HepG2 (cell line): ENCODE measurements at regions of chr14 and their contacts with region 1.

Region 1: DNA sequence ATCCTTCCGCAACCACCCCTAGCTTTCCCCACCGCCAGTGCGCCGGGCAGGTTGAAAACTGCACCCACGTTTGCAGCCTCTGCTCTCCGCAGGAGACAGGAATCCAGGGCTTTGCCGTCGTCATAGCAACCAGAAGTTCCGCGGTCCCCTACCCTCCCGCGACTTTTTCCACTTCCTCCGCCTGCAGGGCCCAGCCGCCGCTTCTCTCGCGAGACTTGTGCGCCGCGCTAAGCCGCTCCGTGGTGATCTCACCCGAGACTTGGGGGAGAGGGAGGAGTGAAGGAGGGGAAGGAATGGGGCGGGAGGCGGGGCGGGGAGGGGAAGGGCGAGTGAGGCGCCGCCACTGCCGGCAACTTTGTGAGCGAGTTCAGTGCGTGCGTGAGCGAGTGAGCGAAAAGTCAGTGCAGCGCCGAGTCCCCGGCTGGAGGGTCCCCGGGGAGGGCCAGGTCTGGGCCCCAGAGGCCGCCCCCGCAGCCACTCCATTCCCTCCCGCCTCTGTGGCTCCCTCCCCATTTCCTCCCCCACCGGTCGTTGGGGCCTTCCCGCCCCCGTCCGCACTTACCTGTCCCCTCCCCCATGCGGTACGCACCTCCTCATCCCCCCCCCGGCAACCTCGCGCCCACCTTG is 413.0 kb downstream of the PCNX1 start:
- DNase-seq: peak; percentile 96
- ATAC-seq: peak; percentile 87
- H3K4me3 ChIP-seq: peak within 1 kb of the TSS; percentile 85 to 95 (median 86)
- H3K27ac ChIP-seq: peak within 1 kb of the TSS; percentile 82
- H3K4me1 ChIP-seq: peaks cover 37% of the 10 kb centered on the region
- H3K27me3 ChIP-seq: no peaks in the 10 kb centered on the region; a peak in 1 of 5 replicates
- CTCF ChIP-seq: 0 out of 2 replicates have a peak, but pooled peaks have one; percentile 10
- EP300 ChIP-seq: no peak
- POLR2A ChIP-seq: peak; percentile 95
- RAD21 ChIP-seq: no peak

Region 2: GRCh38 chr14:71138448-71139293 is 181.5 kb before region 1 on chr14:
- CTCF ChIA-PET with region 1: no interaction called
- POLR2A ChIA-PET with region 1: no interaction called
- in situ Hi-C with region 1: no loop called
- intact Hi-C with region 1: loop called (anchors 5 kb)
- DNase-seq: peak; percentile 31
- ATAC-seq: peak; percentile 84
- H3K4me3 ChIP-seq: peak overlapping the region in 1 of 3 experiments; percentile 28; a peak in 1 of 6 replicates
- H3K27ac ChIP-seq: no peak overlapping the region
- H3K4me1 ChIP-seq: peaks cover 44% of the 10 kb centered on the region
- H3K27me3 ChIP-seq: no peaks in the 10 kb centered on the region
- CTCF ChIP-seq: peak; percentile 96
- EP300 ChIP-seq: no peak
- POLR2A ChIP-seq: no peak
- RAD21 ChIP-seq: peak; percentile 92

Region 3: DNA sequence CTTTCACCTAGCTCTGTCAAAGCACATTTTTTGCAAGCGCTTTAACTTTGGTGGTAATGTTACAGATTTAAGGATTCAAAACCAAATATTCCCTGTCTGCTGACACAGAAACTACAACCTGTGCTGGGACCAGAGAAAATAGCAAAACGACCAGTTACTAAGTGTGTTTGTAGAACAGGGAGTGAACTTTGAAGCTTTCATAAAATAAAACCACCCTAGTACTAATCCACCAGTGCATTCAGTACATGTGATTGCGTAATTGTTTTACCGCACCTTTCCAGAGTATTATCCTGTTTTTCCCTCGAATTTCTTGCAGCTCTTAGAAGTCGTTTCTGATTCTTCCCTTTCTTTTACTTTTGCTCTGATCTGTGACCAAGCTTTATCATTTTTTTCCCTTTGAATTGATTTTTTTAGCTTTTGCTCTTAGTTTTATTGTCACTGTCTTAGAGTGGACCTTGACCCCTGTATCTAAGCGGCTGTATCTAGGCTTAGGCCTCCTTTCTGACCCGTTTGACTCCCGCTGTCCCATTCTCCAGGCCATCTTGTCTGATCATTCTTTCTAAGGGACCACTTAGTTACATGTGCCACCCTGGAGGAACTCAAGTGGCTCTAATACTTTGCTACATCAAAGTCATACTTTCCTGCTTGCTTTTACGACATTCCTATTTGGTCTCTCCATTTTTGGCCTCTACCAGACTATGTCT is 16.4 kb after region 1 on chr14:
- CTCF ChIA-PET with region 1: no interaction called
- POLR2A ChIA-PET with region 1: interaction called, 12 read pairs
- in situ Hi-C with region 1: no loop called
- intact Hi-C with region 1: no loop called
- DNase-seq: peak; percentile 78
- ATAC-seq: peak; percentile 92
- H3K4me3 ChIP-seq: peak overlapping the region; percentile 17 to 56 (median 23); a peak in 4 of 6 replicates
- H3K27ac ChIP-seq: peak overlapping the region; percentile 90
- H3K4me1 ChIP-seq: peaks cover 68% of the 10 kb centered on the region
- H3K27me3 ChIP-seq: no peaks in the 10 kb centered on the region
- CTCF ChIP-seq: no peak
- EP300 ChIP-seq: peak; percentile 47 to 68; a peak in 2 of 4 replicates
- POLR2A ChIP-seq: no peak
- RAD21 ChIP-seq: no peak

Region 4: DNA sequence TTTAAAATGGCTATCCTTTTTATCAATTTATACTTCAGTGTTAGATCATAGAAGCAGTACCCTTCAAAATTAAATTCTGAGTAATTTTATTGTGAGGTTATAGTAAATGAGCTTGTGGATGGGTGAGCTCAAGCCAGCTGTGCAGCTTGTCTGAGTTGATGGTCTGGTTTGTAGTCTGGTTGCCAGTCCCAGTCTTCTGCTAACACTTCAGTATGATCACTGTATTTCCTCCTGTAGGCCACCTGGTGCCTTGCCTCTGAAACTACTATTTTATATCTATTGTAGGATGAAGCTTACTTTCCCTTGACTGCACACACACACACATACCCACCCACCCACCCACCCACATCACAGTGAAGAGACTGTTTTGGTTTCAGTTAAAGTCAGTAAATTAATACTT is 83.4 kb after region 1 on chr14:
- CTCF ChIA-PET with region 1: interaction called, 3 read pairs
- POLR2A ChIA-PET with region 1: interaction called, 3 read pairs
- in situ Hi-C with region 1: no loop called
- intact Hi-C with region 1: loop called (anchors 1 kb)
- DNase-seq: peak; percentile 39
- ATAC-seq: peak; percentile 92
- H3K4me3 ChIP-seq: no peak overlapping the region
- H3K27ac ChIP-seq: no peak overlapping the region
- H3K4me1 ChIP-seq: peaks cover 5% of the 10 kb centered on the region; the same call in 1 of the 2 replicates
- H3K27me3 ChIP-seq: no peaks in the 10 kb centered on the region
- CTCF ChIP-seq: peak; percentile 36
- EP300 ChIP-seq: no peak
- POLR2A ChIP-seq: no peak
- RAD21 ChIP-seq: no peak

Region 5: GRCh38 chr14:71586131-71586897 is 266.1 kb after region 1 on chr14:
- CTCF ChIA-PET with region 1: no interaction called
- POLR2A ChIA-PET with region 1: no interaction called
- in situ Hi-C with region 1: no loop called
- intact Hi-C with region 1: no loop called
- DNase-seq: no peak
- ATAC-seq: no peak
- H3K4me3 ChIP-seq: no peak overlapping the region
- H3K27ac ChIP-seq: no peak overlapping the region
- H3K4me1 ChIP-seq: peaks cover 18% of the 10 kb centered on the region
- H3K27me3 ChIP-seq: no peaks in the 10 kb centered on the region
- CTCF ChIP-seq: no peak
- EP300 ChIP-seq: no peak
- POLR2A ChIP-seq: no peak
- RAD21 ChIP-seq: no peak

Region 6: DNA sequence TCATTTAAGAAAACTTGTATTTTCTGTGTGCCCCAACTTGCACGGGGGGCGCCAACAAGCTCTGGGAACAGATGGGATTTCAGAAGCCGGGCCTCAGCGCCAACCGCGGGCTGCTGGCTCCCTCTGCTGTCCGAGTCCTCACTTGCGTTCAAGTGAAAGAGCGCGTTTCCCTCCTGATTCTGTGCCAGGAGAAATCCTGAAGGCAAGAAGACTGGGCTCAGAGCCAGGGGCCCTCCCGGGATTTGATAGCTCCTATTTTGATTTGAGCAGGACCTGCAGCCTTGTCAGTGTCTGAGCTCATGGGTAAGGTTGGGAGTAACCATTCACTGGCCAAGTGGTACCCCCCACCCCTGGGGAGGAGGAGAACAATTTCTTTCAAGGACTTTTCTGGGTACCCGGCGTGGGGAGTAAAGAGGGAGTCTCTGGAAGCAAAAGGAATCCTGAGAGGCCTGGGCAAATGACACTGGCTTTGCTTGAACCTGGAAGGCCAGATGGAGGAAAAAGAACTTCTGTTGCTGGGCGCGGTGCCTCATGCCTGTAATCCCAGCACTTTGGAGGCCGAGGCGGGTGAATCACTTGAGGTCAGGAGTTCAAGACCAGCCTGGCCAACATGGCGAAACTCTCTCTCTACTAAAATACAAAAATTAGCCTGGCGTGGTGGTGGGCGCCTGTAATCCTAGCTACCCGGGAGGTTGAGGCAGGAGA is 433.1 kb after region 1 on chr14:
- CTCF ChIA-PET with region 1: no interaction called
- POLR2A ChIA-PET with region 1: no interaction called
- in situ Hi-C with region 1: no loop called
- intact Hi-C with region 1: loop called (anchors 5 kb)
- DNase-seq: peak; percentile 62
- ATAC-seq: peak; percentile 89
- H3K4me3 ChIP-seq: no peak overlapping the region
- H3K27ac ChIP-seq: no peak overlapping the region
- H3K4me1 ChIP-seq: no peaks in the 10 kb centered on the region; the same call in 1 of the 2 replicates
- H3K27me3 ChIP-seq: peaks cover 0 to 5% of the 10 kb centered on the region in 2 experiments; a peak in 1 of 5 replicates
- CTCF ChIP-seq: peak; percentile 93
- EP300 ChIP-seq: no peak
- POLR2A ChIP-seq: no peak
- RAD21 ChIP-seq: peak; percentile 96